ENCODE measurements at regions of chr17 and their contacts with region 1.

Region 1: DNA sequence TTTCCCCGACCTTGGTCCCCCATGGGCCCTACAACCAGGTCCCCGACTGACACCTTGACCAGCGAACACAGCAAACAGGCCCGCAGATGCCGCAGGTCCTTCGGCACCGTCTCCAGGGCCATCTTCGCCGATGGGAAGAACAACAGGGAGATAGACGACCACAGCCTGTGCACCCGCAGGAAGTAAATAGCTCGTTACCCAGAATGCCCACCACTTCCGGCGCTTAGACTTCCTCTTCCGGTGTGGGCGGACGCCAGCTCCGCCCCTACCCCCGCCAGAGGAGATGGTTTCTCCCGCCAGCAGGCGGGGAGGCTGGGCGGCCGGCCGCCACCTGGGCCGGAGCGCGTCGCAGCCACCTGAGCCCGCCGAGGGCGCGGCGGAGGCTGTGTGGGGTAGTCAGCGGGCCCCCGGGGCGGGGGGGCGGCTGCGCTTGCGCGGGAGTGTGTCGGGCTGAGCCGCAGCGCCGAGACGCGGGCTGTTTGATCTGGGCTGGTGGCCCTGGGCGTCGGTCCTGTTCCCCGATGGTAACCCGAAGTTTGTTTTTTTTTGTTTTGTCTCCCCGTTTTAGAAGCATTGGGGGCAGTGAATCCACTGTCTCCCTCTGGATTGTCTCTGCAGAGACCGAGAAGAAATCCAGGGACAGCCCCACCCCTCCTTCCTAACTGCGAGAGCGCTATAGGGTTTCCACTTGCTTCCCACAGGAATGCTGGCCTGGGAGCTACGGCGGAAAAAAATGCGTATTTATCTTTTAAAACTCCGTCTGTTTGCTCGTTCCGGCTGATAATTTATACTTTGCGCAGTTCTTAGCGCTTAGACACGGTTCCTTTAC is at the start of gene SUPT4H1:
- DNase-seq: peak; percentile 96
- ATAC-seq: peak; percentile 78
- H3K4me3 Mint-ChIP-seq: peak within 1 kb of the TSS; percentile 97
- H3K27ac Mint-ChIP-seq: peak within 1 kb of the TSS; percentile 98
- H3K4me1 Mint-ChIP-seq: peaks cover 38% of the 10 kb centered on the region
- H3K27me3 Mint-ChIP-seq: no peaks in the 10 kb centered on the region
- total RNA-seq, gene SUPT4H1: 106 to 129 TPM

Region 2: DNA sequence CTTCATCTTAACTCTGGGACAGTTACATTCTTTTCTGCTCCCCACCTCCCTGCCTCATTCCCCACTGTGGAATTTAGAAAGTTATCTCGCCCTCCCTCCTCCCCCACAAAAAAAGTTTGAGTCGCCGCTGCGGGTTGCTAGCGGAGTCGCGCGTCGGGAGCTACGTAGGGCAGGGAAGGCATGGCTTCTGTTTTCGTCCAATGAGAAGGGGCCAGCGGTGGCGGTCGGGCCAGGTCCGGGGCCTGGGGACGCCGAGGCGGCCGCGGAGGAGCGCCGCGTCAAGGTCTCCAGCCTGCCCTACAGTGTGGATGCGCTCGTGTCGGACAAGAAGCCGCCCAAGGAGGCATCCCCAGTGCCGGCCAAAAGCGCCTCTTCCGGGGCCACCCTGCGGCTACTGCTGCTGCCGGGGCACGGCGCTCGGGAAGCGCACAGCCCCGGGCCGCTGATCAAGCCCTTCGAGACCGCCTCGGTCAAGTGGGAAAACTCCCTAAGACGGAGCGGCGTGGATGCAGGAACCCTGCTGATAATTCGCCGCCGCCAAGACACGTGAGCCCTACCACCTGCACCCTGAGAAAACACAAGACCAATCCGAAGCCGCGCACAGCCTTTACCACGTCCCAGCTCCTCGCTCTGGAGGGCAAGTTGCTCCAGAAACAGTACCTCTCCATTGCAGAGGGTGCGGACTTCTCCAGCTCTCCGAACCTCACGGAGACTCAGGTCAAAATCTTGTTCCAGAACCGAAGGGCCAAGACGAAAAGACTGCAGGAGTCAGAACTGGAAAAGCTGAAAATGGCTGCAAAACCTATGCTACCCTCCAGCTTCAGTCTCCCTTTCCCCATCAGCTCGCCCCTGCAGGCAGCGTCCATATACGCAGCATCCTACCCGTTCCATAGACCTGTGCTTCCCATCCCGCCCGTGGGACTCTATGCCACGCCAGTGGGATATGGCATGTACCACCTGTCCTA is 195.1 kb before region 1 on chr17:
- CTCF ChIA-PET with region 1: no interaction called
- POLR2A ChIA-PET with region 1: no interaction called
- intact Hi-C with region 1: no loop called
- DNase-seq: peak; percentile 78
- ATAC-seq: peak; percentile 90
- H3K4me3 Mint-ChIP-seq: peak overlapping the region; percentile 83
- H3K27ac Mint-ChIP-seq: peak overlapping the region; percentile 84
- H3K4me1 Mint-ChIP-seq: peaks cover 47% of the 10 kb centered on the region
- H3K27me3 Mint-ChIP-seq: no peaks in the 10 kb centered on the region

Region 3: DNA sequence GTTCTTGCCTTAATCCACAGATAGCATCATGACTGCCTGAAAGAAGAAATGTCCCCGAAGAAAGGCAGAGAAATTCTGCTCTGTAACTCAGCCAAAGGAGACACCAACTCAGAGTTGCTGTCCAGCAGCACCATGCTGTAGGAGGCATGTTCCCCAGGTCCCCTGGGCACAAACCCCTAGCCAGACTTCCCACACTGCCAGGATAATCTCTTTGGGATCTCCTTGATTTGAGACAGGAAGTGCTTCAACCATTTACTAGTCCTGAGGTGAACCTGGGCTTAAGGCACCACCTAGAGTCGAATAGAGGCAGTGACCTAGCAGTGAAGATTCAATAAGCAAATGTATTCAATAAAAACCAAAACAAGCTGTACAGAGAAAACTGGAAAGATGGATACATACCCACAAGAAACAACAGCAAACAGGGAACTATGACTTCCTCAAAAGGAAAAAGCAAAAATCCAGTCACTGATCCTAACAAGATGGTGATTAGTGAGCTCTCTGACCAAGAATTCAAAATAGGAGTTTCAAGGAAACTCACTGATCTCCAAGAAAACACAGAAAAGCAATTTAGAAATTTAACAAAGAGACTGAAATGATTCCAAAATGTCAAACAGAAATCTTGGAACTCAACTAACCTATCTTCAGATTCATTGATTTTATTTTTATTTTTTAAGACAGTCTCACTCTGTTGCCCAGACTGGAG is 179.7 kb before region 1 on chr17:
- CTCF ChIA-PET with region 1: no interaction called
- POLR2A ChIA-PET with region 1: no interaction called
- intact Hi-C with region 1: no loop called
- DNase-seq: peak; percentile 56
- ATAC-seq: peak; percentile 96
- H3K4me3 Mint-ChIP-seq: no peak overlapping the region
- H3K27ac Mint-ChIP-seq: peak overlapping the region; percentile 38
- H3K4me1 Mint-ChIP-seq: peaks cover 40% of the 10 kb centered on the region
- H3K27me3 Mint-ChIP-seq: no peaks in the 10 kb centered on the region

Region 4: DNA sequence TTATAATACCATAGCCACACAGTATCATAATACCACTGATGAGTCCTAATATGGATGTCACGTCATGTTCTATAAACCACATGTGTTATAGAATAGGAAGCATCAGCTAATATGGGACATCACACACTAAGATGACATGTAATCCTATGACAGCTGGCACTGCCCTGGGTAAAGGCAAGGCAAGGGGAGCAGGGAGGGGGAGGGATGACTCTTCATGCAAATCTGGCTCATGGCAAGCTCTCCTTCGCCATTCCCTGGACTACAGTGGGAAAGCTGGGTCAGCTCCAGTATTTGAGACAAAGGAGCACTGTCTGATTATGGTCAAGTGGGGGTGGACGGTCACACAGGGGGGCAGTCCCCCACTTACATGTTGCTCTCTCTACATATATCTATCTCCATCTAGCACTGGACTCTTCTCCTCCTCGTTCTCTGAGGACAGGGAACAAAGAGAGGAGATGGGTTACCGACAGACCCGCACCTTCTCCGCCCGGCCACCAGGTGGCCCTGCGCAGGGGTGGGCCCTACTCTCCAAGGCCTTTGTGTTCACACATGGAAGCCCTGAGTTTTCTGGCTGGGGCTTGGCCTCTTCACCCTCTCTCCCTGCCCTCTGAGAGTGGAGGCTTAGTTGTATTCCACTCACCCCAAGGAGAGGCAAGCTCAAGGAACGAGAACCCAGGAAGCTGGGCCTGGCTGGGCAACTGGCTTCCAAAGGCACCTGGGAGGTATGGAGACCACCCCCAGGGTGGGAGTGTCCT is 48.1 kb before region 1 on chr17:
- CTCF ChIA-PET with region 1: interaction called, 11 read pairs
- POLR2A ChIA-PET with region 1: no interaction called
- intact Hi-C with region 1: no loop called
- DNase-seq: peak; percentile 80
- ATAC-seq: peak; percentile 97
- H3K4me3 Mint-ChIP-seq: no peak overlapping the region
- H3K27ac Mint-ChIP-seq: no peak overlapping the region
- H3K4me1 Mint-ChIP-seq: peaks cover 3% of the 10 kb centered on the region
- H3K27me3 Mint-ChIP-seq: no peaks in the 10 kb centered on the region

Region 5: DNA sequence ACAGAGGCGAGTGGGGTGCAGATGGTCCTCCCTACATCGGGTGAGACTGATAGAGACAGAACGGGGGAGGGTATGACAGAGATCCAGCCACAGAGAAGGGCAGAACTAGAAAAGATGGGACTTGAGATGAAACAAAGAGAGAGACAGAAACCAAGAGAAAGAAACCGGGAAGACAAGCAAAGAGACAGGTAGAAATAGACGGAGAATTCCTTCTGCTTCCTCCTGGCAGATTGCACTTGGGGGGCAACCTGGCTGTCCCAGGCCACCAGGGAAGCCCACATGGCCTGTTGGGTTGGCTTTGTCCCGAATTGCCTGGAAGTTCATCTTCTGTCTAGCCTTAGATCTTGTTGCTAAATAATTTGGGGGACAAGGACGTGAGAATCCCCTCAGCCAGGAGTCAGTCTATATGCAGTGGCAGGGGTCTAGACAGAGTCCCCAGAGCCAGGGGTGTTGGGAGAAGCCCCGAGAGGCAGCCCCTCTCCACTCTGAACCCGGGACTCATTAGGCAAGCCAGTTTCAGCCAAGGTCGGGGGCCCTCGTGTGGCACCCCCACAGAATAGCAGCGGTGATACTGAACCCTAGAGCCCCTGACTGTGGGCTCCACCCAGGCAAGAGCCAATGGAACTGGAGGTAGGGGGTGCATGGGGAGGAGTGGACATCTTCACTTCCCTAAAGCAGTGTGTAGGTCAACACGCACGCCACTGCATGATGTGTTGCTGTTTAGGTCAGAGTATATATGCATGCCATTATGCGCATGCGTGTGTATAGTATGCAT is 23.0 kb before region 1 on chr17:
- CTCF ChIA-PET with region 1: interaction called, 8 read pairs
- POLR2A ChIA-PET with region 1: interaction called, 56 read pairs
- intact Hi-C with region 1: loop called (anchors 1 kb)
- DNase-seq: peak; percentile 93
- ATAC-seq: peak; percentile 43
- H3K4me3 Mint-ChIP-seq: peak overlapping the region; percentile 100
- H3K27ac Mint-ChIP-seq: peak overlapping the region; percentile 93
- H3K4me1 Mint-ChIP-seq: peaks cover 39% of the 10 kb centered on the region
- H3K27me3 Mint-ChIP-seq: peaks cover 2% of the 10 kb centered on the region

Region 6: DNA sequence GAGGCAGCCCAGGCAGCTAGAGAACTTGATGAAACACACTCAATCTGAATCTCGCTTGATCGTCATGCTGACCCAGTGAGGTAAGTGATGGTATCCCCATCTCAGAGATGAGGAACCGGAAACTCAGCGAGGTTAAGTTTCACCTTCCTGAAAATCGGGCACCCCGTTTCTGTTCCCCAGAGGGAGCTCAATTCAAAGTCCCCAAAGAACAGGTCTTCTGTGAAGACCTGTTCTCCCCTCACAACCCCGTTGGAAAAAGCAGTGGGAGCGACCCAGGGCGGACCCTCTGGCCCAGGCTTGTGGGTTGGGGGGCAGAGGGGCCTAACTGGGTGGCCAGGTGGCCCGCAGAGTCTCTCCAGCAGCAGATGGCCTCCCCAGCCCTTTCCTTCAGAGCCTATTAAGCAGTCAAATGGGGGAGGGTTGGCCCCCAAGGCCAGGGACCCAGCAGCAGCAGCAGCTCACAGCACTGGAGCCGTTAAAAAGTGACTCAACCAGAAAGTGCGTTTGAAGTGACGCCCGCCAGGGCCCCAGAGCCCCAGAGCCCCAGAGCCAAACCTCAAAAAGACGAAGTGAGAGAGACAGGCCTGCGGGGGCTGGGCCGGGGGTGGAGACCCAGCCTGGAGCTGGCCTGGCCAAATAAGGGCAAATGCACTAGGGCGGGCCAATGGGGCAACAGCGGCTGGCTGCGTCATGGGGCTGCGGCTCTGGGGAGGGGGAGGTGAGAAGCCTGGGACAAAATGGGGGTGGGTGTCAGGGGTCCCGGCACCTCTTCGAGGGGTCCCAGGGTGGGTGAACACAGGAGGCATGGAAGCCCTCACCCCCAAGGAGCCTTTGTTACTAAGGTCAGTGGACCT is 14.4 kb before region 1 on chr17:
- CTCF ChIA-PET with region 1: interaction called, 33 read pairs
- POLR2A ChIA-PET with region 1: interaction called, 95 read pairs
- intact Hi-C with region 1: loop called (anchors 1 to 2 kb)
- DNase-seq: peak; percentile 97
- ATAC-seq: peak; percentile 57
- H3K4me3 Mint-ChIP-seq: peak overlapping the region; percentile 100
- H3K27ac Mint-ChIP-seq: peak overlapping the region; percentile 99
- H3K4me1 Mint-ChIP-seq: peaks cover 26% of the 10 kb centered on the region
- H3K27me3 Mint-ChIP-seq: no peaks in the 10 kb centered on the region

Region 7: GRCh38 chr17:58382108-58382871 is 30.1 kb after region 1 on chr17:
- CTCF ChIA-PET with region 1: interaction called, 4 read pairs
- POLR2A ChIA-PET with region 1: interaction called, 3 read pairs
- intact Hi-C with region 1: loop called in 1 of 2 experiments (anchors 2 kb)
- DNase-seq: no peak
- ATAC-seq: peak; percentile 90
- H3K4me3 Mint-ChIP-seq: no peak overlapping the region
- H3K27ac Mint-ChIP-seq: peak overlapping the region; percentile 44
- H3K4me1 Mint-ChIP-seq: peaks cover 36% of the 10 kb centered on the region
- H3K27me3 Mint-ChIP-seq: no peaks in the 10 kb centered on the region

Measured in activated CD4-positive, alpha-beta T cell treated with anti-CD3 and anti-CD28 coated beads for 36 hours (primary cell).